HepG2 (cell line): ENCODE measurements at regions of chr1 and their contacts with region 1.

Region 1: DNA sequence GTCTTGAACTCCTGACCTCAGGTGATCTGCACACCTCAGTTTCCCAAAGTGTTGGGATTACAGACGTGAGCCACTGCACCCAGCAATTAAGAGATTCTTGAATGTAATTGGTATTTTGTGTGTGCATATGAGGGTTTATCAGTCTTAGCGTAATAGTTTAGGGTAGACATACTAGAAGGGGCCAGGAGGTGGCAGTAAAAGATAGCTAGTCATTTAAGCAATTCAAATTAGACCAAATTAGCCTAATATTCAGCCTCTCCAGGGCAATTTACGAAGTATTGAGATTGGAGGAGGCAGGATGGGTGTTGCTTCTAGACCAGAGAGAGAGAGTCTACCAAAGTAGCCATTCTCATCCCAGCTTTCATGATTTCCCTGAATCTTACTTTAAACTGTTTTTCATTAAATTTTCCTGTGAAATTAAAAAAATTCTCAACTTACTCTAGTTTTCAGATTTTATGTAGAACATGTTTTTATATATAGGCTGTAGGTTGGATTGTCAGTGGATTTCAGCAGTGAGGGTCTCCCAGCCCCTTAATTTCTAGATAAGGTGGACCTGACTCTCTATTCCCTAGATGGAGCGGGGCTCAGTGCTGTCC is 119.7 kb downstream of the HHAT start:
- DNase-seq: peak; percentile 14
- ATAC-seq: peak; percentile 70
- H3K4me3 ChIP-seq: no peak overlapping the region
- H3K27ac ChIP-seq: no peak overlapping the region
- H3K4me1 ChIP-seq: no peaks in the 10 kb centered on the region
- H3K27me3 ChIP-seq: no peaks in the 10 kb centered on the region
- CTCF ChIP-seq: peak; percentile 52
- EP300 ChIP-seq: no peak
- POLR2A ChIP-seq: no peak
- RAD21 ChIP-seq: no peak

Region 2: GRCh38 chr1:210596641-210597040 is 148.2 kb after region 1 on chr1:
- CTCF ChIA-PET with region 1: no interaction called
- POLR2A ChIA-PET with region 1: no interaction called
- in situ Hi-C with region 1: no loop called
- intact Hi-C with region 1: no loop called
- DNase-seq: no peak
- ATAC-seq: no peak
- H3K4me3 ChIP-seq: no peak overlapping the region
- H3K27ac ChIP-seq: no peak overlapping the region
- H3K4me1 ChIP-seq: no peaks in the 10 kb centered on the region
- H3K27me3 ChIP-seq: no peaks in the 10 kb centered on the region
- CTCF ChIP-seq: no peak
- EP300 ChIP-seq: no peak
- POLR2A ChIP-seq: no peak
- RAD21 ChIP-seq: no peak

Region 3: DNA sequence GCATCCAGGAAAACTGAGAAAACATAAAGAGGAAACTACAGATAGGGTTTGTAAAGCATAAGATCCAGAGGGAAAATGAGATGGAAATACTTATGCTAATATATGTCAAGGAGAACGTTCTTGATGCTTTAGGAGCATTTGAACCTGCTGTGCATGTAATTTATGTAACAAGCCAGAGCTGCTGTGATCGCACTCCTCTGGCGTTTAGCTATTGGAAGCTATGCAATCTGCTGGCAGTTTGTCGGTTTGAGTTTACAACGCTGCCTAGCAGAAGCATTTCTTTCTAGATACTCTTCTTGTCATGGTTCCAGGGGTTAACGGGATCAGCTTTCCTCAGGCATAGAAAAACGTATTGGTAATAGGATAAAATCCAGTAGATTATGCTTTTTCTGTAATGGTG is 502.9 kb after region 1 on chr1:
- CTCF ChIA-PET with region 1: no interaction called
- POLR2A ChIA-PET with region 1: no interaction called
- in situ Hi-C with region 1: no loop called
- intact Hi-C with region 1: loop called (anchors 2 kb)
- DNase-seq: no peak
- ATAC-seq: no peak
- H3K4me3 ChIP-seq: no peak overlapping the region
- H3K27ac ChIP-seq: no peak overlapping the region
- H3K4me1 ChIP-seq: no peaks in the 10 kb centered on the region
- H3K27me3 ChIP-seq: no peaks in the 10 kb centered on the region
- CTCF ChIP-seq: no peak
- EP300 ChIP-seq: no peak
- POLR2A ChIP-seq: no peak
- RAD21 ChIP-seq: no peak

Region 4: GRCh38 chr1:211476200-211476849 is 1027.9 kb after region 1 on chr1:
- CTCF ChIA-PET with region 1: no interaction called
- POLR2A ChIA-PET with region 1: no interaction called
- in situ Hi-C with region 1: no loop called
- intact Hi-C with region 1: loop called (anchors 5 kb)
- DNase-seq: peak; percentile 56
- ATAC-seq: peak; percentile 88
- H3K4me3 ChIP-seq: no peak overlapping the region
- H3K27ac ChIP-seq: no peak overlapping the region
- H3K4me1 ChIP-seq: 0 out of 2 replicates have a peak, but pooled peaks cover 9% of the 10 kb centered on the region
- H3K27me3 ChIP-seq: peaks cover 0 to 19% of the 10 kb centered on the region in 2 experiments; a peak in 3 of 5 replicates
- CTCF ChIP-seq: peak; percentile 72
- EP300 ChIP-seq: no peak
- POLR2A ChIP-seq: no peak
- RAD21 ChIP-seq: no peak